Naive thymus-derived CD4-positive, alpha-beta T cell (primary cell): ENCODE measurements at regions of chr6 and their contacts with region 1.

Region 1: GRCh38 chr6:130215526-130215925 is 7.2 kb downstream of the SAMD3 start:
- DNase-seq: peak in 8 of 9 donors; percentile 31 to 79 (median 70)
- ATAC-seq: peak; percentile 96
- H3K4me3 ChIP-seq: peak overlapping the region; percentile 63
- H3K4me3 Mint-ChIP-seq: peak overlapping the region; percentile 74 to 98 (median 90)
- H3K27ac ChIP-seq: peak overlapping the region; percentile 54
- H3K27ac Mint-ChIP-seq: peak overlapping the region; percentile 82 to 92 (median 86)
- H3K4me1 ChIP-seq: peaks cover 29 to 35% of the 10 kb centered on the region in 2 donors
- H3K4me1 Mint-ChIP-seq: peaks cover 21 to 81% (median 69%) of the 10 kb centered on the region in 7 donors
- H3K27me3 ChIP-seq: no peaks in the 10 kb centered on the region
- H3K27me3 Mint-ChIP-seq: no peaks in the 10 kb centered on the region

Region 2: DNA sequence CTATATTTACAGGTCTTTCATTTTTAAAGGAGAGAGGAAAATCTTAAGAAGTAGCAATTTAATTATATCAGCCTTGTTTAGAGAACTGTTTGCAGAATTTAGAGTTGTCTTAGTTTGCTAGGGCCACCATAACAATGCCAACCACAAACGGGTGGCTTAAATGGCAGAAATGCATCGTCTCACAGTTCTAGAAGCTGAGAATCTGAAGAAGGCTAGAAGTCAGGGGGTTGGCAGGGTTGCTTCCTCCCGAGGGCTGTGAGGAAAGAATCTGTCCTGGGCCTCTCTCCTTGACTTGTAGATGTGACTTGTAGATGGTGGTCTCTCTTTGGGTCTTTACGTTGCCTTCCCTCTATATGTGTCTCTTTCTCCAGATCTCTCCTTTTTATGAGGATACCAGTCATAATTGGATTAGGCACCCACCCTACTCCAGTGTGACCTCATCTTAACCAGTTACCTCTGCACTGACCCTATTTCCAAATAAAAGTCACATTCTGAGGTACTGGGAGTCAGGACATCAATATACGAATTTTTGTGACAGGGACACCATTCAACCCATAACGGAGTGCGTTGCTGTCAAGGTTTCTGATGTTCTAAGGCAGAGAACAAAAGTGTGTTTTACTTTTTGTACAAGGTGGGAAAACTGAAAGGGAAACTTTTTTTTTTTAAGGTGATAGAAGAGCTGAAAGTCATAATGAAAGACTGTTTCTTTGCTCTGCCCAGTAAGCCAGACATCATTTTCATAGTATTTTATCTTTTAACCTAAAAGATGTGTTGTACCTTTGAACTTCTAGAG is 77.2 kb before region 1 on chr6:
- CTCF ChIA-PET with region 1: interaction called, 5 read pairs
- POLR2A ChIA-PET with region 1: interaction called, 4 read pairs
- intact Hi-C with region 1: loop called (anchors 2 kb)
- DNase-seq: peak in 5 of 9 donors; percentile 11 to 42 (median 25)
- ATAC-seq: peak; percentile 60
- H3K4me3 ChIP-seq: peak overlapping the region; percentile 37
- H3K4me3 Mint-ChIP-seq: peak overlapping the region; percentile 69 to 98 (median 84)
- H3K27ac ChIP-seq: peak overlapping the region; percentile 70
- H3K27ac Mint-ChIP-seq: peak overlapping the region; percentile 88 to 97 (median 94)
- H3K4me1 ChIP-seq: peaks cover 38 to 55% of the 10 kb centered on the region in 2 donors
- H3K4me1 Mint-ChIP-seq: peaks cover 60 to 93% (median 85%) of the 10 kb centered on the region in 7 donors
- H3K27me3 ChIP-seq: no peaks in the 10 kb centered on the region
- H3K27me3 Mint-ChIP-seq: no peaks in the 10 kb centered on the region

Region 3: DNA sequence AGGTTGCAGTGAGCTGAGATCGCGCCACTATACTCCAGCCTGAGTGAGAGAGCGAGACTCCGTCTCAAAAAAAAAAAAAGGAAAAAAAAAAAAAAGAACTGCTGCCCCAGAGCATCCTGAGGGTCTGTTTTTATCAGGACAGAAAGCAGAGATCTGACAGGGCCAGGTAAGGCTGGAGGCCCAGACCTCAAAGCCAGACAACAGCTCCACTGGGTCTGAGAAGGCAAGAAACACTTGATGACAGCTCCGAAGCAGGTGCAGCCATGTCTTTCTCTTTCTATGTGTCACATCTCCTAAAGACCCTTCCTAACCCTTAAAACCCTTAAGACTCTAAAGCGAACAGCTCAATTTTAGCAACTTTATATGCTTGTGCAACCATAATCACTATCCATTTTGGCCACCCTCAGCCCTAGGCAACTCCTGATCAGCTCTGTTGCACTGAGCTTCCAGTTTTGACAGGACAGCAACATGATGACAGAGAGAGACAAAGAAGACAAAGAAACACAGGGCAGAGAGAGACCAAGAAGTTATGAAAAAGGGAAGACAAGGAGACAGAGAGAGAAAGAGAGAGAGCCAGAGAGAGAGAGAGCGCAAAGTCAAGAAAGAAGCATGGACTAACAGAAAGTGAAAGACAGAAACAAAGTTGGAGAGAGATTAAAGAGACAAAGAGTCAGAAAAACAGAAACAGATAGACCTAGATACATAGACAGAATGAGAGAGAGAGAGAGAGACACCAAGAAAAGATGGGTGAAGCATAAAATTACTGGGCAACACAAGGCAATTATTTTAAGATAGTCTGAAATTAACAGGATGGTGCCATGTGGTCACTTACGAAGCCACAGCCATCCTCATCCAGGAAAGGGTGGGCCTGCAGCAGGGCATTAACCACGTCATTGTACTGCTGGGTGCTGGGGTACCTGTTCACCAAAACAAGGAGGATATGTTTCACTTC is 32.0 kb before region 1 on chr6:
- CTCF ChIA-PET with region 1: interaction called, 8 read pairs
- POLR2A ChIA-PET with region 1: interaction called, 11 read pairs
- intact Hi-C with region 1: loop called (anchors 1 to 2 kb)
- DNase-seq: peak in 7 of 9 donors; percentile 5 to 75 (median 60)
- ATAC-seq: peak; percentile 80
- H3K4me3 ChIP-seq: peak overlapping the region; percentile 33
- H3K4me3 Mint-ChIP-seq: peak overlapping the region; percentile 39 to 81 (median 70)
- H3K27ac ChIP-seq: peak overlapping the region; percentile 75
- H3K27ac Mint-ChIP-seq: peak overlapping the region; percentile 59 to 98 (median 91)
- H3K4me1 ChIP-seq: peaks cover 23 to 32% of the 10 kb centered on the region in 2 donors
- H3K4me1 Mint-ChIP-seq: peaks cover 27 to 76% (median 65%) of the 10 kb centered on the region in 7 donors
- H3K27me3 ChIP-seq: no peaks in the 10 kb centered on the region
- H3K27me3 Mint-ChIP-seq: no peaks in the 10 kb centered on the region

Region 4: GRCh38 chr6:130189531-130190397 is 25.8 kb before region 1 on chr6:
- CTCF ChIA-PET with region 1: interaction called, 8 read pairs
- POLR2A ChIA-PET with region 1: interaction called, 11 read pairs
- intact Hi-C with region 1: loop called (anchors 1 to 2 kb)
- DNase-seq: peak in 4 of 9 donors; percentile 11 to 14 (median 13)
- ATAC-seq: no peak
- H3K4me3 ChIP-seq: peak overlapping the region; percentile 10
- H3K4me3 Mint-ChIP-seq: peak overlapping the region in 8 of 10 donors; percentile 14 to 75 (median 58)
- H3K27ac ChIP-seq: peak overlapping the region; percentile 46
- H3K27ac Mint-ChIP-seq: peak overlapping the region in 8 of 9 donors; percentile 66 to 95 (median 84)
- H3K4me1 ChIP-seq: peaks cover 35 to 39% of the 10 kb centered on the region in 2 donors
- H3K4me1 Mint-ChIP-seq: peaks cover 47 to 98% (median 91%) of the 10 kb centered on the region in 7 donors
- H3K27me3 ChIP-seq: no peaks in the 10 kb centered on the region
- H3K27me3 Mint-ChIP-seq: no peaks in the 10 kb centered on the region

Region 5: GRCh38 chr6:130202782-130203181 is 12.7 kb before region 1 on chr6:
- CTCF ChIA-PET with region 1: no interaction called
- POLR2A ChIA-PET with region 1: interaction called, 6 read pairs
- intact Hi-C with region 1: loop called in 1 of 2 experiments (anchors 1 kb)
- DNase-seq: no peak
- ATAC-seq: no peak
- H3K4me3 ChIP-seq: no peak overlapping the region
- H3K4me3 Mint-ChIP-seq: peak overlapping the region in 7 of 10 donors; percentile 22 to 70 (median 56)
- H3K27ac ChIP-seq: no peak overlapping the region
- H3K27ac Mint-ChIP-seq: peak overlapping the region in 7 of 9 donors; percentile 50 to 87 (median 77)
- H3K4me1 ChIP-seq: peaks cover 15 to 49% of the 10 kb centered on the region in 2 donors
- H3K4me1 Mint-ChIP-seq: peaks cover 15 to 92% (median 81%) of the 10 kb centered on the region in 7 donors
- H3K27me3 ChIP-seq: no peaks in the 10 kb centered on the region
- H3K27me3 Mint-ChIP-seq: no peaks in the 10 kb centered on the region